KBM-7 (cell line): ENCODE measurements at regions of chr15 and their contacts with region 1.

Region 1: GRCh38 chr15:44971036-44971435 is 14.5 kb downstream of the TERB2 start:
- DNase-seq: no peak

Region 2: DNA sequence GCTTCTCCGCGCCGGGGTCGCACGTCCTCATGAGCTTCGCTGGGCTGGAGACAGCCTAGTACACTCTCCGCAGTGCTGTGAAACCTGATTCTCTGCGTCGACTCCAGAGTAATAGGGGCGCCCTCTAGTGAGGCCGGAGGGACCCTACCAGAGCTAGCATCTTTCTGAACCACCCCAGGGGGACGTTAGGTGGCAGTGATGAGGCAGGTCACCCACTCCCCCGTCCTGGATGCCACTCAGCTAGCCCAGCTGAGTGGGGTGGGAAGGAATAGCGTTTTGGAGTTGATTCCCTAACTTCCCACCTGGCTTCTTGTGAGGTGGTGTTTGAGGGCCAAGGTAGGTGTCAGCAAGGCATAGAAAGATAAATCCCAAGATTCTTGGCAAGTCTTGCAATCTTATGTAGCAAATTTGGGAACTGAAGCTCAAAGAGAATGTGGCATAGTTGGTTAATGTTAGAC is 147.1 kb after region 1 on chr15:
- in situ Hi-C with region 1: loop called (anchors 25 kb)
- DNase-seq: peak; percentile 94